ENCODE measurements at regions of chr5 and their contacts with region 1.

Region 1: GRCh38 chr5:181223058-181223728 is at the start of gene TRIM41:
- DNase-seq: peak; percentile 98
- ATAC-seq: peak; percentile 67
- H3K4me3 Mint-ChIP-seq: peak within 1 kb of the TSS; percentile 95
- H3K27ac Mint-ChIP-seq: peak within 1 kb of the TSS; percentile 98
- H3K4me1 Mint-ChIP-seq: peaks cover 51% of the 10 kb centered on the region
- H3K27me3 Mint-ChIP-seq: peaks cover 6% of the 10 kb centered on the region
- CTCF ChIP-seq: no peak
- total RNA-seq, gene TRIM41: 34.9 and 39.6 TPM in 2 replicates

Region 2: GRCh38 chr5:180831139-180832048 is 391.8 kb before region 1 on chr5:
- CTCF ChIA-PET with region 1: no interaction called
- POLR2A ChIA-PET with region 1: interaction called, 15 read pairs
- intact Hi-C with region 1: no loop called
- DNase-seq: peak; percentile 82
- ATAC-seq: peak; percentile 83
- H3K4me3 Mint-ChIP-seq: peak overlapping the region; percentile 98
- H3K27ac Mint-ChIP-seq: peak overlapping the region; percentile 98
- H3K4me1 Mint-ChIP-seq: peaks cover 54% of the 10 kb centered on the region
- H3K27me3 Mint-ChIP-seq: no peaks in the 10 kb centered on the region
- CTCF ChIP-seq: no peak

Region 3: GRCh38 chr5:181149353-181149752 is 73.8 kb before region 1 on chr5:
- CTCF ChIA-PET with region 1: no interaction called
- POLR2A ChIA-PET with region 1: no interaction called
- intact Hi-C with region 1: no loop called
- DNase-seq: no peak
- ATAC-seq: no peak
- H3K4me3 Mint-ChIP-seq: no peak overlapping the region
- H3K27ac Mint-ChIP-seq: no peak overlapping the region
- H3K4me1 Mint-ChIP-seq: no peaks in the 10 kb centered on the region
- H3K27me3 Mint-ChIP-seq: peaks cover 46% of the 10 kb centered on the region
- CTCF ChIP-seq: no peak

Region 4: GRCh38 chr5:181159286-181159829 is 63.8 kb before region 1 on chr5:
- CTCF ChIA-PET with region 1: no interaction called
- POLR2A ChIA-PET with region 1: interaction called, 4 read pairs
- intact Hi-C with region 1: loop called (anchors 2 kb)
- DNase-seq: peak; percentile 87
- ATAC-seq: peak; percentile 74
- H3K4me3 Mint-ChIP-seq: peak overlapping the region; percentile 75
- H3K27ac Mint-ChIP-seq: peak overlapping the region; percentile 81
- H3K4me1 Mint-ChIP-seq: peaks cover 29% of the 10 kb centered on the region
- H3K27me3 Mint-ChIP-seq: peaks cover 10% of the 10 kb centered on the region
- CTCF ChIP-seq: no peak

Region 5: DNA sequence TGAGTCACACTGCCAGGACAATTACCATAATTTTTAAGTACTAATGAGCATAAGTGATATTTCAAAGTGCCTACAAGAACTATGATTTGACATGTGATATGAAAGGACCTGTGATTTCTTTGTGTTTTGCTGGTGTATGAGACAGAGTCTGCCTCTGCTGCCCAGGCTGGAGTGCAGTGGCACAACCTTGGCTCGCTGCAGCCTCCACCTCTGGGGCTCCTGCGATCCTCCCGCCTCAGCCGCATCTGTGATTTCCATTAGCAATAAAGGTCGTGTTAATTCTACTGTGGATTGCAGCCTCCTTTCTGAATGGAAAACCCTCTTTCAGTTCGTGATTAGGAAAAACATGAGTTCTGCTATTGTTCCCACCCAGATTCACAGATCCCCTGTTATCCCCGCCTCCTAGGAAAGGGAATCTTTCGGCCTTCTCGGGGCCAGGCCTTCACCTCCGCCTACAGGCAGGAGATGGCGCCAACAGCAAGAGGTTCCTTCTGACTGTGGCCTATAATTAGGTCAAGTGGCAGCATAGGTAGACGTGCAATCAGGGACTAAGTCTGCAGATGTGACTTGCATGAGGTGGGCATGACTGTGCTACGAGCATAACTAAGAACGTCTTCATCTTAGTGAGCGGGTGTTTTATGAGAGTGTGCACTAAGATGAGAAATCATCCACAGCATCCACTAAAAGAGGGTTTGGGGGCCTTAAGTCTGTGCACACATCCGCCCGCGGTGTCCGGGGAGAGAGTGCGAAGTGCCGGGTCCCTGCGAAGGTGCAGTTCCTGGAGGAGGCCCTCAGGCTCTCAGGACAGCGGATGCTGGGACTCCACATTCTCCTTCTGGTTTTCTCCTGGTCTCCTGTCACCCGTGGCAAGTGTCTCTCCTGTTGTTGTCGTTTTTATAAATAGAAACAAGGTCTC is 41.3 kb before region 1 on chr5:
- CTCF ChIA-PET with region 1: interaction called, 7 read pairs
- POLR2A ChIA-PET with region 1: interaction called, 137 read pairs
- intact Hi-C with region 1: loop called (anchors 1 kb)
- DNase-seq: no peak
- ATAC-seq: peak; percentile 70
- H3K4me3 Mint-ChIP-seq: no peak overlapping the region
- H3K27ac Mint-ChIP-seq: no peak overlapping the region
- H3K4me1 Mint-ChIP-seq: peaks cover 31% of the 10 kb centered on the region
- H3K27me3 Mint-ChIP-seq: no peaks in the 10 kb centered on the region
- CTCF ChIP-seq: peak; percentile 41

Region 6: GRCh38 chr5:181198963-181199519 is 24.2 kb before region 1 on chr5:
- CTCF ChIA-PET with region 1: no interaction called
- POLR2A ChIA-PET with region 1: interaction called, 21 read pairs
- intact Hi-C with region 1: no loop called
- DNase-seq: no peak
- ATAC-seq: peak; percentile 94
- H3K4me3 Mint-ChIP-seq: peak overlapping the region; percentile 5
- H3K27ac Mint-ChIP-seq: peak overlapping the region; percentile 51
- H3K4me1 Mint-ChIP-seq: peaks cover 34% of the 10 kb centered on the region
- H3K27me3 Mint-ChIP-seq: no peaks in the 10 kb centered on the region
- CTCF ChIP-seq: no peak

Region 7: DNA sequence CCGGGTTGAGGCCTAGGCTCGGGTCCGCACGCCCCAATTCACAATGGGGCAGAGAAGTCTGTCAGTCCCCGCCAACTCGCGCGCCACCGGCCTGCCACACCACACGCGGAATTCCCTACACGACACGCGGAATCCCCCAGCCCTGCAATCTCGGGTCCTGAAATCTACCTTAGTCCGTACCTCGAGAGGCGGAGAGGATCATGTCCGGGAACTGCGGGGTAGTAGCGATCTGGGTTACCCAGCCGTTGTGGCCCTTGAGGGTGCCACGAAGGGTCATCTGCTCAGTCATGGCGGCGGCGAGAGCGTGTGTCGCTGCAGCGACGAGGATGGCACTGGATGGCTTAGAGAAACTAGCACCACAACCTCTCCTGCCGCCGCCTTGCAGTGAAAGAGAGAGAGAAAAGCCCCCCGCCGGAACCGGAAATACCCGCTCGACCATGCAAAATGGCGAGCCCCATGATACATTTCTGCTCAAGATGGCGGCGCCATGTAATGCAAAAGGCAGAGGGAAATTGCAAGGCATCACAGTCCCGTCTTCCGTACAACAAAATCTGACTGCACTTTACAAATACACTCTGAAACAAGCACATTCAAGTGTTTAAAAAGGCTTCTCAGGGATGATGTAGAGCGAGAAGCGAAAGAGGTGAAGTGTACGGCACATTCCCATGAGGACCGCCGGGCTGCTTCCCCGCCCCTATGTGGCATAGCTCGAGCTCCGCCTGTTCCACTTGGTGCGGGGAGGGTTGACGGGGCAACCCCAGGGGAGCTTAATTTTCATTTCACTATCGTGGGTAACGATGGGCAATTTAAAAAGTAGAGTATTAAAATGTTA is 20.5 kb after region 1 on chr5 and contains the start of gene RACK1:
- CTCF ChIA-PET with region 1: interaction called, 7 read pairs
- POLR2A ChIA-PET with region 1: interaction called, 177 read pairs
- intact Hi-C with region 1: loop called (anchors 1 kb)
- DNase-seq: peak; percentile 79
- ATAC-seq: peak; percentile 79
- H3K4me3 Mint-ChIP-seq: peak within 1 kb of the TSS; percentile 96
- H3K27ac Mint-ChIP-seq: peak within 1 kb of the TSS; percentile 98
- H3K4me1 Mint-ChIP-seq: peaks cover 73% of the 10 kb centered on the region
- H3K27me3 Mint-ChIP-seq: no peaks in the 10 kb centered on the region
- CTCF ChIP-seq: no peak
- total RNA-seq, gene RACK1: 2,528 and 2,812 TPM in 2 replicates